ENCODE measurements at regions of chr18 and their contacts with region 1.

Region 1: DNA sequence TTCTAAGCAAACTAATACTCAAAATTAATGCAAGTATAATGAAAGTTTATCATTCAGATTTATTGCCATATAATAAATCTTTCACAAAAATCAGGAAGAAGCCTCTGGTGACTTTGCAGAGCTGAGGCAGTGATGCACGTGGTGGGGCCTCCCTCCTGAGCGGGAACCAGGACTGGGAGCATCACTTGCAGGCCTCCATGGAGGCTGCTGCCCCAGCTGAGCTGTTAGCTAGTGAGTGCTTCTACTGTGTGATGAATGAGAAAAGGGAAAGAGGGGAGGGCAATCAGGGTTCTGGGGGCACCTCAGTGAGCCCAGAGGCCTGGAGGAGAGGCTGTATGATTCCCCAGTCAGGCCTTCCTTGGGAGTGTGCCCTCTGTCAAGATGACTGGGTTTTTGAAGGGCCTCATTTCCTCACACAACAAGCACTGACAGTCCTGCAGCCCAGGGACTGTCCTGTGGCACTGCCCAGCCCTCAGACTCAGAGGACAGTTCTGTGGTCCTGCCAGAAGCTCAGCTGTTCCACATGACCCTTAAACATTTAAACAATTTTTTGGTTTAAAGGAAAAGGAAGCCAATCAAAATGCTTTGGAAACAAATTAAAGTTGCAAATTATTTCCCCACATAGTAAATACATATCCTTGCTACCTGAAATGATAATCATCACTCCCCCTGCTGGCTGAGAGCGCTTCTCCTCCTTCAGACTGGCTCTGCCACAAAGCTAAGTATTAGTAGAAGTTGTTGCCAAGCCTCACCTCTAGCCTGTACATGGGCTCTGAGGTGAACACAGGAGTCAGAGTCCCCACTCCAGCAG is 90.9 kb upstream of the SMAD7 start:
- DNase-seq: peak in 1 of 2 experiments; percentile 43
- ATAC-seq: peak in 1 of 2 experiments; percentile 83; a peak in 3 of 6 replicates
- H3K4me3 ChIP-seq: no peak overlapping the region
- H3K27ac ChIP-seq: peak overlapping the region; percentile 27 to 64; a peak in 2 of 6 replicates
- H3K4me1 ChIP-seq: 0 out of 3 replicates have a peak, but pooled peaks cover 3% of the 10 kb centered on the region
- CTCF ChIP-seq: peak; percentile 38; the same call in 2 of the 3 replicates
- EP300 ChIP-seq: no peak
- POLR2A ChIP-seq: no peak
- RAD21 ChIP-seq: peak; percentile 47 to 61

Region 2: GRCh38 chr18:49025767-49026500 is 15.7 kb before region 1 on chr18:
- CTCF ChIA-PET with region 1: interaction called, 13 read pairs
- POLR2A ChIA-PET with region 1: no interaction called
- DNase-seq: no peak
- ATAC-seq: no peak
- H3K4me3 ChIP-seq: no peak overlapping the region
- H3K27ac ChIP-seq: no peak overlapping the region
- H3K4me1 ChIP-seq: peaks cover 9% of the 10 kb centered on the region
- CTCF ChIP-seq: no peak
- EP300 ChIP-seq: no peak
- POLR2A ChIP-seq: no peak
- RAD21 ChIP-seq: no peak

Region 3: GRCh38 chr18:49072524-49072934 is 30.9 kb after region 1 on chr18:
- CTCF ChIA-PET with region 1: no interaction called
- POLR2A ChIA-PET with region 1: no interaction called
- DNase-seq: no peak
- ATAC-seq: no peak
- H3K4me3 ChIP-seq: no peak overlapping the region
- H3K27ac ChIP-seq: no peak overlapping the region
- H3K4me1 ChIP-seq: 0 out of 3 replicates have a peak, but pooled peaks cover 9% of the 10 kb centered on the region
- CTCF ChIP-seq: no peak
- EP300 ChIP-seq: no peak
- POLR2A ChIP-seq: no peak
- RAD21 ChIP-seq: no peak

Region 4: GRCh38 chr18:49368876-49369440 is 327.3 kb after region 1 on chr18:
- CTCF ChIA-PET with region 1: no interaction called
- POLR2A ChIA-PET with region 1: no interaction called
- DNase-seq: no peak
- ATAC-seq: no peak
- H3K4me3 ChIP-seq: no peak overlapping the region
- H3K27ac ChIP-seq: no peak overlapping the region
- H3K4me1 ChIP-seq: no peaks in the 10 kb centered on the region
- CTCF ChIP-seq: no peak
- EP300 ChIP-seq: no peak
- POLR2A ChIP-seq: no peak
- RAD21 ChIP-seq: no peak

Measured in A549 (cell line).